GM13976 (cell line): ENCODE measurements at regions of chr18 and their contacts with region 1.

Region 1: GRCh38 chr18:32919799-32920198 is 147.0 kb upstream of the KLHL14 start:
- DNase-seq: peak; percentile 41
- CTCF ChIP-seq: peak; percentile 62

Region 2: DNA sequence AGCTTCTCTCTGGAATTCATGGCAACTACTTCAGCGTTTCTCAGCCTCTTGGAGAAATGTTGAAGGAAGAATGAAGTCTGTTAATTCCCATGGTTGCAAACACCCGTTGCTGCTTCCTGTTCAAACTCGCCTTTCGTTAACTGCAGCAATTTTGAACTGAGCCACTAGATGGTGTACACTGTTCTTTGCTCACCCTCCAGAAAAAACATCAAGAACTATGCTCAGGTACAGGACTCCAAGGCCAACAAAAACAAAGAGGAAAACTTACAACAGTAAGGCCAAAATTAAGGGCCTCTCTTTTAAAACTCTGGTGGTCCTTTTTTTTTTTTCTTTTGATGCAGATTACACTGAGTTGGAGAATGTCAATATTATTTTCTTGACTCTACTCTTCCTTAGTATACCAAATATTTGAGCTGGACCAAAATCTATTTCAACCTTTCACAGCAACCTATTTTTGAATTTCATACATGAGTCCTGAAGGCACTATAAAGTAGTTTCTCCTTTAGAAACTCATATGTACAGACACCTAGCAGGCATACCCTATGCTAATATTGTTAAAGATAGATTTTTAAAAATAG is 205.1 kb before region 1 on chr18:
- in situ Hi-C with region 1: loop called (anchors 10 kb)
- DNase-seq: peak; percentile 42
- CTCF ChIP-seq: peak; percentile 78